PC-9 (cell line): ENCODE measurements at regions of chr19 and their contacts with region 1.

Region 1: DNA sequence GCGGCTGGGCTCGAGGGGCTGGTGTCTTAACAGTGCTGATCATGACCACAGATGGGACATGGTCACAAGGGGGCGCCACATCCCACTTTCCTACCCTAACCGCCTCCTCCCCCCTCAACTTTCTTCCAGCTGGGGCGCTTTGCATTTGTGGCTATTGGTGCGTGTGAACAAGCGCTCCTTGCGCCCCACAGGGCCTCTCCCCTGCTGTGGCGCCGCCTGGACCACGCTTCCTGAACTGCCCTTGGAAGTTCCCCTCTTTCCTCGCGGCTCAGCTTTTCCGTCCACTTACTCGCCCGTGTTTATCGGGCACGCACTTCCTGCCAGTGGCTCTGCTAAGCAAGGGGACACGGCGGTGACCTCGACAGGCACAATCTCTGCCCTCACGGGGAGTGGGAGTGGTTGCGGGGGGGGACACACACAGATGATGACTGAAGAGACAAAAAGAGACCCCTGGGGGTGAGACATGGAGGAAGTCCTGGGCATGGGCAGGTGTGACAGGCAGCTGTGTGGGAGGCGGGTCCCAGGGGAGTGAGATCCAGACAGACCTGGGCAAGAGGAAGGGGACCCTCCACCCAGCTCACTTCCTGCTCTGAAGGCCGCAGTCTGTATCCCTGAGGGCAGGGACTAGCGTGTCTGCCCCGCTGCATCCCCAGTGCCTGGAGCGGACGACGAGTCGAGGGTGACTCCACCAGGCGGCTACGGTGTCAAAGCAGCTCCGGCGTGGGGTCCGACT is 40.3 kb downstream of the ZNF787 start:
- DNase-seq: peak in 1 of 2 experiments; percentile 77
- H3K4me3 ChIP-seq: no peak overlapping the region
- H3K27ac ChIP-seq: no peak overlapping the region
- H3K4me1 ChIP-seq: no peaks in the 10 kb centered on the region
- H3K27me3 ChIP-seq: no peaks in the 10 kb centered on the region
- CTCF ChIP-seq: peak; percentile 64

Region 2: GRCh38 chr19:55766466-55766865 is 314.4 kb before region 1 on chr19:
- CTCF ChIA-PET with region 1: no interaction called
- POLR2A ChIA-PET with region 1: no interaction called
- intact Hi-C with region 1: no loop called
- DNase-seq: no peak
- H3K4me3 ChIP-seq: no peak overlapping the region
- H3K27ac ChIP-seq: no peak overlapping the region
- H3K4me1 ChIP-seq: no peaks in the 10 kb centered on the region
- H3K27me3 ChIP-seq: peaks cover 80% of the 10 kb centered on the region
- CTCF ChIP-seq: no peak

Region 3: GRCh38 chr19:55947532-55947931 is 133.3 kb before region 1 on chr19 and contains the start of gene NLRP8:
- CTCF ChIA-PET with region 1: no interaction called
- POLR2A ChIA-PET with region 1: no interaction called
- intact Hi-C with region 1: no loop called
- DNase-seq: no peak
- H3K4me3 ChIP-seq: no peak within 1 kb of the TSS
- H3K27ac ChIP-seq: no peak within 1 kb of the TSS
- H3K4me1 ChIP-seq: no peaks in the 10 kb centered on the region
- H3K27me3 ChIP-seq: peaks cover 65% of the 10 kb centered on the region
- CTCF ChIP-seq: no peak
- total RNA-seq, gene NLRP8: not detected in 2 replicates

Region 4: DNA sequence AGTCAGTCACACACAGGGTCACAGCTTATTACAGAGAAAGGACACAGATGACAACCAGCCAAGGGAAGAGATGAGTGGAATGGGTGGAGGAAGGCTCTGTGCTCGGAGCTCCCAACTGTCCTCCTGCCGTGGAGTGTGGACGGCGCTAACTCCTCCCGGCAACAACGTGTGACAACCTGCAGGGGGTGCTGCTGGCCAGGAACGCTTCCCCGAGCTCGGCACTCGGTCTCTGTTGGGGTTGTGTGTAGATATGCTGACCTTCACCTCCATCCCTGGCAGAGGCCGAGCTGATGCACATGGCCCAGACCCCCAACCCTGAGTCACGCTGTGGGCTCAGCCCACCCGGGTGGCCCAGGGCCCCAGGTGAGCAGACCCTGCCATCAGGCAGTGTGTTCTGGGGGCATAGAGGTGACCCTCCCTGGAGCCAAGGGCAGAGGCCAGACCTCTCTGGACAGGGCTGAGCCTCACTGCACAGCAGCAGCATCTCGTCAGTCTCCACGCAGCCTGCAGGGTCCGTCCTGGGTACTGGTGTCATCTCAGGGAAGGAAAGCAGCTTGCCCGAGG is 74.4 kb after region 1 on chr19:
- CTCF ChIA-PET with region 1: no interaction called
- POLR2A ChIA-PET with region 1: no interaction called
- intact Hi-C with region 1: no loop called
- DNase-seq: no peak
- H3K4me3 ChIP-seq: no peak overlapping the region
- H3K27ac ChIP-seq: no peak overlapping the region
- H3K4me1 ChIP-seq: no peaks in the 10 kb centered on the region
- H3K27me3 ChIP-seq: no peaks in the 10 kb centered on the region
- CTCF ChIP-seq: peak; percentile 56

Region 5: DNA sequence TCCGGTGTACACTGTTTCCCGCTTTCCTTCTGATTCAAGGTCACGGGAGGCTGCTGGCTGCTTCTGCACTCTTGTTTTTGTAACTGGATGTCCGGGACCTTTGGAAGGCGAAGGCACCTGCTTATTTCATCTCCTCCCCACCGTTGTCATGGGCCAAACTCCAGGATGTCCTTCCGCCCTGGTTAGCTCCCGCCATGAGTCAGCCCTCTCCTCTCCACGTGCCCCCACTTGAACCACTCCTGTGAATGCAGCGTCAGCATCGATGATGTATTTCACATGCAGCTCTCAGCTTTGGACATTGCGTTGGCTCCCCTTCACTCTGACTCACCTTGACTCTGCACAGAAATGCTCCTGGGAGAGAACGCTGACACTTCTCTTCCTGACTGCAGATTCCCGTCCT is 89.4 kb after region 1 on chr19:
- CTCF ChIA-PET with region 1: interaction called, 7 read pairs
- POLR2A ChIA-PET with region 1: no interaction called
- intact Hi-C with region 1: loop called (anchors 1 kb)
- DNase-seq: peak; percentile 67 to 80
- H3K4me3 ChIP-seq: no peak overlapping the region
- H3K27ac ChIP-seq: no peak overlapping the region
- H3K4me1 ChIP-seq: peaks cover 5% of the 10 kb centered on the region
- H3K27me3 ChIP-seq: peaks cover 21% of the 10 kb centered on the region
- CTCF ChIP-seq: no peak